ENCODE measurements at regions of chr17 and their contacts with region 1.

Region 1: GRCh38 chr17:17523001-17523730 is 27.0 kb upstream of the RASD1 start:
- DNase-seq: no peak
- H3K4me3 ChIP-seq: no peak overlapping the region
- H3K27ac ChIP-seq: no peak overlapping the region
- H3K4me1 ChIP-seq: peaks cover 0 to 17% (median 10%) of the 10 kb centered on the region in 4 experiments; a peak in 6 of 7 replicates
- H3K27me3 ChIP-seq: no peaks in the 10 kb centered on the region
- CTCF ChIP-seq: 0 out of 4 replicates have a peak, but pooled peaks of 1 of the 3 experiments have one; percentile 5
- EP300 ChIP-seq: no peak
- POLR2A ChIP-seq: no peak
- RAD21 ChIP-seq: no peak

Region 2: DNA sequence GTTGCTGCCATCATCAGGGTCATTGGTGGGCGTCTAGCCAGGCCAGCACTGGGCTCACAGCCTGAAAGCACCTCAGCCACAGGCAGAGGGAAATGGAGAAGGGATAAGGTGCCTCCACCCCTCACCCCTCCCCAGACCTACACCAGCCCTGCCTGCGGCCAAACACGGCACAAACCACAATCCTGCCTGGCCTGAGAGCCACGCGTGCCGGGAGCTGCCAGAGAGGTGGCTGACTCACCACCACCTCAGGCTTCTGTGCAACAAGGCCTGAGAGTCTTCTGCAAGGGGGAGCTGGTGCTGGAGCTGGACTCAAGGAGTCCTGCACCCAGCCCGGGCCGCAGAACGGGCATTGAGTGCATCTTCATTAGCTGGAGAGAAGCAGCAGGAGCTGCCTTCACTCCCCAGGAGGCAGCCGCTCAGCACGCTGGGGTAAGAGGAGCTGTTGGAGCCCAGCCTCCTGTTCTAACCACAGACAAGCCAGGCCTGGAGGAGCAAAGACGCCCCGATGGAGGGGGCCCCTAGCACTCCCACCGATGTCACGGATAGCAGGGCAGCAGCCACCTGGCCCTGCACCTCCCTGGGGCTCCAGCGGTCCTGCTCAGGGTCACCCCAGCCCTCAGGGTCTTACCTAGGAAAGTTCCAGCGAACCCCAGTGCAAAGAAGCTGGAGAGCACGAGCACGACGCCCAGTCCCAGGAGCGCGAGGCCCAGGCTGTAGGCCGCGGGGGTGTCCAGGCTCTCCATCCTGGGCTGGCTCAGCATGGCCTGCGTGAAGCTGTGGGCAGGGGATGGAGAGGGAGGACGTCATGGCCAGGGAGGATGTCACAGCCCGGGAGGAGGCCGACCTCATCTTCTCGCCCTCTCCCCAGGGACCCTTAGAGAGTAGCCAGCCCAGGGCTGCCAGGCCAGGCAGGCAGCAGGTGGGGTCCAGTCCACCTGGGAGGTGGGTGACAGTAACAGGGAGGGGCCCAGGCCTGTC is 11.0 kb before region 1 on chr17:
- CTCF ChIA-PET with region 1: interaction called, 11 read pairs
- POLR2A ChIA-PET with region 1: no interaction called
- DNase-seq: no peak
- H3K4me3 ChIP-seq: no peak overlapping the region
- H3K27ac ChIP-seq: no peak overlapping the region
- H3K4me1 ChIP-seq: peaks cover 4 to 24% (median 12%) of the 10 kb centered on the region in 4 experiments
- H3K27me3 ChIP-seq: no peaks in the 10 kb centered on the region
- CTCF ChIP-seq: no peak
- EP300 ChIP-seq: no peak
- POLR2A ChIP-seq: no peak
- RAD21 ChIP-seq: no peak

Measured in H1 (cell line).